ENCODE measurements at regions of chr11 and their contacts with region 1.

Region 1: GRCh38 chr11:78465169-78465942 is 47.7 kb upstream of the GAB2 start:
- DNase-seq: peak; percentile 59
- H3K4me3 Mint-ChIP-seq: peak overlapping the region; percentile 73
- H3K27ac Mint-ChIP-seq: peak overlapping the region; percentile 92
- H3K4me1 Mint-ChIP-seq: peaks cover 45% of the 10 kb centered on the region
- H3K27me3 Mint-ChIP-seq: no peaks in the 10 kb centered on the region

Region 2: DNA sequence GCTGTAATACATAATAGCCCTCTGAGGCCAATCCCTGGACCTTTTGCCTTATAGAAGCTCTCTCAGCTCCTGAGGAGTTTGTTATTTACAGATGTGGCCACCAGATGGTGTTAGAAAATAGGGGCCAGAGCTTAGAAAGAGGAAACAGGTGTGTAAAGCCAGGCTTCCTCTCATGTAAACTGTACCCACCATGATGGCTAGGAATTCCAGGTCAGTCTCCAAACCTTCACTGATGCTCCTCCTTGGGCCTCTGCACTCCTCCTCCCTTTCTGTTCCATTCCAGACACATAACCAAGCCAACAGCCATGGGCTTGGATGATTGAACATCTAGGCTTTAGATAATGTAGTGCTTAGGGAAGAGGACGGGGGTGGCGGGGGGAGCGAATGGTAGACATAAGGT is 236.9 kb before region 1 on chr11:
- intact Hi-C with region 1: loop called (anchors 1 kb)
- DNase-seq: peak; percentile 21
- H3K4me3 Mint-ChIP-seq: no peak overlapping the region
- H3K27ac Mint-ChIP-seq: no peak overlapping the region
- H3K4me1 Mint-ChIP-seq: peaks cover 75% of the 10 kb centered on the region
- H3K27me3 Mint-ChIP-seq: no peaks in the 10 kb centered on the region

Region 3: GRCh38 chr11:78298291-78298771 is 167.0 kb before region 1 on chr11:
- intact Hi-C with region 1: loop called (anchors 1 kb)
- DNase-seq: no peak
- H3K4me3 Mint-ChIP-seq: no peak overlapping the region
- H3K27ac Mint-ChIP-seq: no peak overlapping the region
- H3K4me1 Mint-ChIP-seq: peaks cover 34% of the 10 kb centered on the region
- H3K27me3 Mint-ChIP-seq: no peaks in the 10 kb centered on the region

Region 4: GRCh38 chr11:78325274-78325781 is 140.0 kb before region 1 on chr11:
- intact Hi-C with region 1: loop called (anchors 1 kb)
- DNase-seq: peak; percentile 28
- H3K4me3 Mint-ChIP-seq: peak overlapping the region; percentile 56
- H3K27ac Mint-ChIP-seq: peak overlapping the region; percentile 86
- H3K4me1 Mint-ChIP-seq: peaks cover 78% of the 10 kb centered on the region
- H3K27me3 Mint-ChIP-seq: no peaks in the 10 kb centered on the region

Region 5: GRCh38 chr11:78453140-78453935 is 12.0 kb before region 1 on chr11:
- intact Hi-C with region 1: loop called (anchors 1 kb)
- DNase-seq: no peak
- H3K4me3 Mint-ChIP-seq: peak overlapping the region; percentile 5
- H3K27ac Mint-ChIP-seq: peak overlapping the region; percentile 64
- H3K4me1 Mint-ChIP-seq: peaks cover 23% of the 10 kb centered on the region
- H3K27me3 Mint-ChIP-seq: no peaks in the 10 kb centered on the region

Region 6: GRCh38 chr11:78574386-78575381 is 109.3 kb after region 1 on chr11 and contains the start of gene NARS2:
- intact Hi-C with region 1: loop called (anchors 1 kb)
- DNase-seq: peak; percentile 95
- H3K4me3 Mint-ChIP-seq: peak within 1 kb of the TSS; percentile 90
- H3K27ac Mint-ChIP-seq: peak within 1 kb of the TSS; percentile 86
- H3K4me1 Mint-ChIP-seq: peaks cover 40% of the 10 kb centered on the region
- H3K27me3 Mint-ChIP-seq: peaks cover 7% of the 10 kb centered on the region
- total RNA-seq, gene NARS2: 38.2 and 38.7 TPM in 2 replicates